Breast epithelium (tissue), 4 donors: ENCODE measurements at regions of chr15 and their contacts with region 1.

Region 1: DNA sequence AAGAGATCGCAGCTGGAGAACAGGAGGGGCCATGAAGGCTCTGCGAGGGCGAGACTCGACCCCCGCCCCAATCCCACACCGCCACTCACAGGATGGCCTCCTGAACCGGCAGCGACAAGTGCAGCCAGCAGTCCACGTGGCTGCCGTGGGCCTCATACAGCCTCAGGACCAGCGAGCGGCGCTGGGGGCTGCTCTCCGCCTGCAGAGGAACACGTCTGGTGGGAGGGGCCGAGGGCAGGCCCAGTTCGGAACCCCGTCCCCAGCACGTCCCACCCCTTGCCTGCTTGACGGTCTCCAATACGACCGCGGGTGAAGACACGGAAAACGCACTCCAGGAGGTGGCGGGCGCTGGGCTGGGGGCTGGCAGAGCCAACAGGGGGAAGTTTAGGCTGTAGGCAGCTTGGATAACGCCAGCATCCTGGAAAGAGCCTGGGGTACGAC is 9.2 kb downstream of the NEIL1 start:
- DNase-seq: no peak
- H3K4me3 ChIP-seq: no peak overlapping the region
- H3K27ac ChIP-seq: no peak overlapping the region
- H3K4me1 ChIP-seq: no peaks in the 10 kb centered on the region
- H3K27me3 ChIP-seq: no peaks in the 10 kb centered on the region
- CTCF ChIP-seq: no peak
- POLR2A ChIP-seq: no peak

Region 2: DNA sequence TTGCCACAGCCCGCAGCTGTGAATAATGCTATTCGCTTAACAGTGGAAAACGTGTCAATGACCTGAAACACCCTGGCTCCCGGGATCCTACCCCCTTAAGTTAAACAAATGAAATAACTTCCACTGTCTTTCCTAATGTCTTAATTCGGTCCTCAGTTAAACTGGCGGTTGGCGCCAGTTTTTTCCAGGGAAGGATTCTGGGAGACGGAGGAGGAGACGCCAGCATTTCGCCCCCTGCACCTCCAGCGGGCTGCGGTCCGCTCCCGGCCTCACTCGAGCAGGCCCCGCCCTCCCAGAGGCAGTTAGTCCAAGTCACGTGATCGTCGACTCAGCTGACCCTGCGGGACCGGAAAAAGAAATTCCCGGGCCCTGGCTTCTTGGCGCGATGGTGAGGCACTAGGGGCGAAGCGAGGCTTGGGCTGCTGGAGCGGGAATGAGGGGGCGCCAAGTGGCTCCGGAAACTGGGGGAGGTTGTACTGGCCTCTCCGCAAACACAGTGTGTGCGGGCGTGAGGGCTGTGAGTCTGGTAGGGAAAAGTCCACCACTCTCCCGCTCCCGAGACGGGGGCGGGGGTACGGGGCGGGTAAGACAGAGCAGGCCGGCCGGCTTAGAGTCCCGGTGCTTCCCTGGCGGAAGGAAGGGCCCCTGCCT is 20.2 kb before region 1 on chr15 and contains the start of gene COMMD4:
- intact Hi-C with region 1: no loop called
- DNase-seq: peak; percentile 94 to 98
- H3K4me3 ChIP-seq: peak within 1 kb of the TSS; percentile 66 to 80 (median 74)
- H3K27ac ChIP-seq: peak within 1 kb of the TSS; percentile 73 to 82
- H3K4me1 ChIP-seq: no peaks in the 10 kb centered on the region
- H3K27me3 ChIP-seq: no peaks in the 10 kb centered on the region
- CTCF ChIP-seq: no peak
- POLR2A ChIP-seq: no peak
- total RNA-seq, gene COMMD4: 61.6 to 66.6 (median 63.6) TPM

Region 3: DNA sequence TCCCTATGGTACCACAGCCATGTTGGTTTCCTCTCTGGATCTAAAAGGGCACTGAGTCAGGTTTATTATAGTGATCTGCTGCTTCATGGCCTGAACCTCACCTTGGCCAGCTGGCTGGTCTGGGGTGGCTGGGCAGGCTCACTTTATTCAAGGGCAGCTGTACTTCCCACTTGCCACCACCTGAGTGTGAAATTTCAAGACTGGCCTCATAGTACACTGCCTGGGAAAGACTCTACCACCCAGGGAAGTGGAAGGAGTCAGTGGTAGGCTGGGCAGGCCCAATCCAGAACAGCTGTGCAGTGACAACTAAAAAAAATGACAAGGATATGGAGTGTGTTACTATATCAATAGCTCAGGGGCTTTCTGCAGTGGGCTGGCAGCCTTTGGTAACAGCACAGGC is 260.7 kb after region 1 on chr15:
- intact Hi-C with region 1: loop called (anchors 1 kb)
- DNase-seq: no peak
- H3K4me3 ChIP-seq: no peak overlapping the region
- H3K27ac ChIP-seq: no peak overlapping the region
- H3K4me1 ChIP-seq: peaks cover 0 to 5% of the 10 kb centered on the region in 2 donors
- H3K27me3 ChIP-seq: no peaks in the 10 kb centered on the region
- CTCF ChIP-seq: no peak
- POLR2A ChIP-seq: no peak